ENCODE measurements at regions of chr18 and their contacts with region 1.

Region 1: GRCh38 chr18:79068937-79069791 is at the start of gene ATP9B:
- DNase-seq: peak; percentile 100
- H3K4me3 Mint-ChIP-seq: peak within 1 kb of the TSS; percentile 89
- H3K27ac Mint-ChIP-seq: peak within 1 kb of the TSS; percentile 99
- H3K4me1 Mint-ChIP-seq: peaks cover 27% of the 10 kb centered on the region
- H3K27me3 Mint-ChIP-seq: peaks cover 19% of the 10 kb centered on the region
- total RNA-seq, gene ATP9B: 23.8 and 30.3 TPM in 2 replicates

Region 2: GRCh38 chr18:78953546-78953945 is 115.6 kb before region 1 on chr18:
- intact Hi-C with region 1: no loop called
- DNase-seq: no peak
- H3K4me3 Mint-ChIP-seq: no peak overlapping the region
- H3K27ac Mint-ChIP-seq: no peak overlapping the region
- H3K4me1 Mint-ChIP-seq: no peaks in the 10 kb centered on the region
- H3K27me3 Mint-ChIP-seq: no peaks in the 10 kb centered on the region

Region 3: GRCh38 chr18:79123948-79124347 is 54.8 kb after region 1 on chr18:
- intact Hi-C with region 1: loop called (anchors 5 kb)
- DNase-seq: no peak
- H3K4me3 Mint-ChIP-seq: no peak overlapping the region
- H3K27ac Mint-ChIP-seq: no peak overlapping the region
- H3K4me1 Mint-ChIP-seq: peaks cover 5% of the 10 kb centered on the region
- H3K27me3 Mint-ChIP-seq: no peaks in the 10 kb centered on the region

Region 4: GRCh38 chr18:79405781-79406575 is 336.8 kb after region 1 on chr18:
- intact Hi-C with region 1: loop called (anchors 2 kb)
- DNase-seq: peak; percentile 96
- H3K4me3 Mint-ChIP-seq: peak overlapping the region; percentile 83
- H3K27ac Mint-ChIP-seq: peak overlapping the region; percentile 96
- H3K4me1 Mint-ChIP-seq: peaks cover 47% of the 10 kb centered on the region
- H3K27me3 Mint-ChIP-seq: no peaks in the 10 kb centered on the region

Region 5: GRCh38 chr18:79951578-79952455 is 882.7 kb after region 1 on chr18 and contains the start of gene SLC66A2:
- intact Hi-C with region 1: loop called (anchors 5 kb)
- DNase-seq: peak; percentile 98
- H3K4me3 Mint-ChIP-seq: peak within 1 kb of the TSS; percentile 88
- H3K27ac Mint-ChIP-seq: peak within 1 kb of the TSS; percentile 79
- H3K4me1 Mint-ChIP-seq: peaks cover 29% of the 10 kb centered on the region
- H3K27me3 Mint-ChIP-seq: peaks cover 3% of the 10 kb centered on the region
- total RNA-seq, gene SLC66A2: 45.6 and 46.5 TPM in 2 replicates

Region 6: DNA sequence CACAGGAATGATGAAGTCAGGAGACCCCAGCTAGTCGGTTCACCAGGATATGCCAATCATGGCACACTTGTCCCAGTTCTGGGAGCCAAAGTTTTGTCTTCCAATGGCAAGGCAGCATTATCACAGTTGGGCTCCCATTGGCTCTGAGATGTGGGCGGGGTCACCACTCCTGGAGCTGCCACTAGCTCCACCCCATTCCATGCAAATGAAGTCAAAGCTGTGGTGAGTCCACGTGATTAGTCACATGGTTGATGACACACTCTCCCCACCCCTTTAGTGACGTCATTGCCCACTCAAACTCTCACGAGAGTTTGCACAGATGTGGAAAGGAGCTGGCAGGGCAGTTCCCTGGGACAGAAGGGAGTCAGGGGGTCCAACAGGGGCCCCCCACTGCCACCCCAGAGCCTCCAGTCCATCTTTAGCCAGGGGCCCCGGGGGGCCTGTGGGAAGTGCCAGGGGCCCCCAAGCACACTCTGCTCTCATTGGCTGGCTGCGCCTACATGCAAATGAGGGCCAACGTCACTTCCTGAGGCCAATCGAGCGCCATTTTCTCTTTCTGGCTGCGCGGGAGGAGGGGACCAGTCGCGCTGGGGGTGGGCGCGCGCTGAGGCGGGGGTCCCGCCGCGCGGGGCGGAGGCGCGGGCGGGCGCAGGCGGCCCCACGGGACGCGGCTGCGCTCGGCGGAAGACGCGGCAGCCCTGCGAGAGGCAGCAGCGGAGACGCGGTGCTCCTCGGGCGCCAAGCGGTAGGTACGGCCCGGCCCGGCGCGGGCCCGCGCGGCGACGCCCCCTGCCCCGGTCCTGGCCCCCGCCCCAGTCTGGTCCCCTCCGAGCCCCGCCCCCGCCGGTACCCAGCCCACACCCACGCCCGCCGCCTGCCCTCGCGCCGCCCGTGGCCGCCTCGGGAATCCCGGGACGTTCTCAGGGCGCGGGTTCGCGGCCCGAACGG is 1039.8 kb after region 1 on chr18 and contains the start of gene ADNP2:
- intact Hi-C with region 1: loop called (anchors 5 kb)
- DNase-seq: peak; percentile 96
- H3K4me3 Mint-ChIP-seq: peak within 1 kb of the TSS; percentile 85
- H3K27ac Mint-ChIP-seq: peak within 1 kb of the TSS; percentile 88
- H3K4me1 Mint-ChIP-seq: peaks cover 24% of the 10 kb centered on the region
- H3K27me3 Mint-ChIP-seq: no peaks in the 10 kb centered on the region
- total RNA-seq, gene ADNP2: 29.3 and 29.8 TPM in 2 replicates